Activated T-helper 2 cell treated with anti-CD3 and anti-CD28 coated beads, Interferon-gamma antibody, Interleukin-2, Interleukin-4, amounts not matched to agents 10 μg/mL and 5 μg/mL and 100 μg/mL, durations not matched to agents 14 hours and 24 hours and 36 hours (primary cell): ENCODE measurements at regions of chr19 and their contacts with region 1.

Region 1: DNA sequence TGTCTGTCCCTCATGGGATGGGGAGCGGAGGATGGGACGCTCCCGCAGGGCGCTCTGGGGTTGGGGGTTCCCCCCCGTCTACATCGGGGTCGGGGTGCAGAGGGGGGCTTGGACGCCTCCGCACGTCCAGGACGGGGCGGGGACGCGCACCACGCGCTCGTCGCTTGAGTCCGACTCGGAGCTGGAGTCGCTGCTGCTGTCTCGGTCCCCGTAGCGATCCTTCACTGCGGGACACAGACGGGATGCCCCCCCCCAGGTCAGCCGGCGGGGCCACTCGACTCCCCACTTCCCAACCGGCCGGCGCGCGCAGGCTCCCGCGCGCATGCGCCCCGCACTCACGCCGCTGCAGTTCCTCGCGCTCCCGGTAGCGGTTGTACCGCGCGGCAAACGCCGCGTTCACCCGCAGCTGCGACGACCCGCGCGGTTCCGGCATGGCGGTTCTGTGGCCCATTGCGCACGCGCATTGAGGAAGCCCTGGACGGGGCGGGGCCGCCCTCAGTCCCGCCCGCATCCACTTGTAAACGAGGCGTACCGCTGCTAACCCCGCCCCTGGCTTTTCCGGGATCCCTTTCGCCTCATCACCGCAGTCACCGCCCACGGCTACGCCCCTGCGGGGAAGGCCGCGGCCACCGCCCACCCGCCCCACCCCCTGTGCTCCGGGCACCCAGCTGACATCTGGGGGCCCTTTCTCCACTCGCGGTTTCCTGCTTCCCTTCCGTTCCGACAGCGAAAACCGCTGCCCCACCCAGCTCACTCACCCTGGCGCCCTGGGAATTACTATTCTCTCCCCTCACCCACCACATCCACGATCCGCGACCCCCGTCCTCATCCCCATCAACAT is at the start of gene KRI1:
- DNase-seq: peak; percentile 99
- H3K4me3 Mint-ChIP-seq: peak within 1 kb of the TSS; percentile 91
- H3K27ac Mint-ChIP-seq: peak within 1 kb of the TSS; percentile 91
- H3K4me1 Mint-ChIP-seq: peaks cover 38% of the 10 kb centered on the region
- H3K27me3 Mint-ChIP-seq: no peaks in the 10 kb centered on the region
- total RNA-seq, gene KRI1: 66.7 and 69.5 TPM in 2 replicates

Region 2: DNA sequence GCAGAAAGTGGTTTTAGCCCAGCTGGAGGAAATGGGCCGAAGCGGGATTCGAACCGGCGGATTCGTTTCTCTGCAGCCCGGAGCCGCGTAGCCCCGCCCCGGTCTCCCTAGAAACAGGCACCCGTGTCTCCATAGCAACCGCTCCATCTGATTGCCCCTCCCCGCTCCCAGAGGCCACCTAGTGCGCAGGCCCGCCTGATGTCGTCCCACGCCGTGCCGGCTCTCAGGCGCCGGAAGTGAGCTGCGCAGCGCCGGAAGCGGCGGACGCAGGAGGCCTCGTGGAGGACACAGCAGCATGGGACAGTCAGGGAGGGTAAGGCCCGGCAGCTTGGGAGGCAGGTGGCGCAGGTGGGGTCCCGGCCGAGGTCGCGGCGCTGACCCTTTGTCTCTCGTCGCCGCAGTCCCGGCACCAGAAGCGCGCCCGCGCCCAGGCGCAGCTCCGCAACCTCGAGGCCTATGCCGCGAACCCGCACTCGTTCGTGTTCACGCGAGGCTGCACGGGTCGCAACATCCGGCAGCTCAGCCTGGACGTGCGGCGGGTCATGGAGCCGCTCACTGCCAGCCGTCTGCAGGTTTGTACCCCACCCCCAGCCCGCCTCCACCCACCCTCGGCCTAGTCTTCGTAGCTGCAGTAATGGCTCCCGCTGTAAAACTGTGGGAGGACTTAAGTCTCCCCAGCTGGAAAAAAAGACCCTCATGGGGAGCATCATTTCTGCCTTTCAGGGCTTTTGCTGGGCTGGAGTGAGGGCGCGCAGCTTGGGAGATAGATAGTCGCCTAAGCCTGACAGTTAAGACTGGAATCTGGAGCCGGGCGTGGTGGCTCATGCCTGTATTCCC is 459.5 kb before region 1 on chr19 and contains the start of gene PPAN:
- intact Hi-C with region 1: loop called (anchors 2 kb)
- DNase-seq: peak; percentile 97
- H3K4me3 Mint-ChIP-seq: peak within 1 kb of the TSS; percentile 95
- H3K27ac Mint-ChIP-seq: peak within 1 kb of the TSS; percentile 100
- H3K4me1 Mint-ChIP-seq: peaks cover 51% of the 10 kb centered on the region
- H3K27me3 Mint-ChIP-seq: no peaks in the 10 kb centered on the region
- total RNA-seq, gene PPAN: 160 and 162 TPM in 2 replicates

Region 3: GRCh38 chr19:10403137-10404021 is 162.4 kb before region 1 on chr19 and contains the start of gene CDC37:
- intact Hi-C with region 1: loop called (anchors 1 kb)
- DNase-seq: peak; percentile 98
- H3K4me3 Mint-ChIP-seq: peak within 1 kb of the TSS; percentile 96
- H3K27ac Mint-ChIP-seq: peak within 1 kb of the TSS; percentile 87
- H3K4me1 Mint-ChIP-seq: peaks cover 41% of the 10 kb centered on the region
- H3K27me3 Mint-ChIP-seq: no peaks in the 10 kb centered on the region
- total RNA-seq, gene CDC37: 285 and 300 TPM in 2 replicates

Region 4: GRCh38 chr19:10502524-10503001 is 63.2 kb before region 1 on chr19:
- intact Hi-C with region 1: loop called (anchors 5 kb)
- DNase-seq: peak; percentile 92
- H3K4me3 Mint-ChIP-seq: peak overlapping the region; percentile 93
- H3K27ac Mint-ChIP-seq: peak overlapping the region; percentile 88
- H3K4me1 Mint-ChIP-seq: peaks cover 32% of the 10 kb centered on the region
- H3K27me3 Mint-ChIP-seq: no peaks in the 10 kb centered on the region

Region 5: GRCh38 chr19:10543420-10544241 is 22.2 kb before region 1 on chr19 and contains the start of gene ATG4D:
- intact Hi-C with region 1: loop called (anchors 1 kb)
- DNase-seq: peak; percentile 72
- H3K4me3 Mint-ChIP-seq: peak within 1 kb of the TSS; percentile 88
- H3K27ac Mint-ChIP-seq: peak within 1 kb of the TSS; percentile 78
- H3K4me1 Mint-ChIP-seq: peaks cover 8% of the 10 kb centered on the region
- H3K27me3 Mint-ChIP-seq: peaks cover 14% of the 10 kb centered on the region
- total RNA-seq, gene ATG4D: 34.1 and 37.2 TPM in 2 replicates

Region 6: DNA sequence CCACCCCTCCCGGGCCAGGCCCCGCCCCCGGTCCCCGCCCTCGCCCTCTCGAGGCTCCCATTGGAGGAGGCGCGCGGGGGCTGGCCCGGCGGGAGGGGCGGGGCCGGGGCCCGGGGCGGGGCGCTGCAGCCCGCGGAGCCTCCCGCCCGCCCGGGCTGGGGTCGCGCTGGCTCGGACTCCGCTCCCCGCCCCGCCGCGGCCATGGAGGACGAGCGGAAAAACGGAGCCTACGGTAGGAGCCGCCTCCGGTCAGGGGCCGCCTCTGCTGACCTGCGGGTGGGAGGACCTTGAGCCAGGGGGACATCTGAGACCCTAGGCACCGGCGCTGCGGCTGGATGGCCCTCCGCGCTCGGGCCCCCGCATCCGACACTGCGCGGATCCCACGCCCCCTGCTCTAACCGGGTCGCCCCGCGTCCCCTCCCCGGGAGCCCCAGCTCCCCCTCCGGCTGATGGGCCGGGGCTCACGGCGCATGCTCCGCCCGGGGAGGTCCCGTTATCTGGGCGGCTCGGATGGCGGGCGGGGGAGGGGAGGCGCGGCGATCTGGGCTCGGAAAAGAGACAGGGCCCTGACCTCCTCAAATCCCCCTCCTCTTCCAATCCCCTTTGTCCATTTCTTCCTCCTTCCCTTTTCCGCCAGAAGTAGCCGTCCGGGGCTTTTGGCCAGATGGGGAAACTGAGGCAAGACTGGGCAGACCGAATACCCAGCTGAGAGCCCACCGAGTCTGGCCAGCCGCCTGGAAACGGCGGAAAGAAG is 36.7 kb after region 1 on chr19:
- intact Hi-C with region 1: loop called (anchors 2 kb)
- DNase-seq: peak; percentile 78
- H3K4me3 Mint-ChIP-seq: peak overlapping the region; percentile 97
- H3K27ac Mint-ChIP-seq: peak overlapping the region; percentile 100
- H3K4me1 Mint-ChIP-seq: peaks cover 16% of the 10 kb centered on the region
- H3K27me3 Mint-ChIP-seq: peaks cover 1% of the 10 kb centered on the region

Region 7: DNA sequence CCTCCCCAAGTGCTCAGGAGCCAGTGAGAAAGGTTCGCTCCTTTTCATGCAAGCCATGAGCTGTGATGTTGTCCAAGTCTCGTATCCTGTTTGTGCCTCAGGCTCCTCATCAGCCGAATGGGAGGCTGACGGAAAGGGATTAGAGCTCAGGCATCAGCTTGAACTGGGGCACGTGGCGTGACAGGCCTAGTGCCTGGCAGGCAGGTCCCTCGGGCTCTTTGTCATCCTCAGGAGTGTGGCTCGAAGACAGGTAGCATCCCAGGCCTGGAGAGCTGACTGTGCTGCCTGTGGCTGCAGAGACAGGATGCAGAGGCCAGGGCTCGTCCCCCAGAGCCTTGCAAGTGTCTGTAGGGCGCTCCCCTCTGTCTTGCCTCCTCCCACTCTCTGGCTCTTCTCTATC is 190.6 kb after region 1 on chr19:
- intact Hi-C with region 1: loop called (anchors 5 kb)
- DNase-seq: no peak
- H3K4me3 Mint-ChIP-seq: peak overlapping the region; percentile 26
- H3K27ac Mint-ChIP-seq: peak overlapping the region; percentile 56
- H3K4me1 Mint-ChIP-seq: peaks cover 58% of the 10 kb centered on the region
- H3K27me3 Mint-ChIP-seq: no peaks in the 10 kb centered on the region